Body of pancreas (tissue), 4 donors: ENCODE measurements at regions of chr22 and their contacts with region 1.

Region 1: GRCh38 chr22:31846161-31847115 is 92.6 kb downstream of the DEPDC5 start:
- DNase-seq: no peak
- ATAC-seq: no peak
- H3K4me3 ChIP-seq: no peak overlapping the region
- H3K27ac ChIP-seq: no peak overlapping the region
- H3K4me1 ChIP-seq: no peaks in the 10 kb centered on the region
- H3K27me3 ChIP-seq: no peaks in the 10 kb centered on the region
- CTCF ChIP-seq: peak in 1 of 7 experiments; percentile 11
- POLR2A ChIP-seq: no peak

Region 2: GRCh38 chr22:31901388-31902137 is 55.1 kb after region 1 on chr22:
- intact Hi-C with region 1: loop called (anchors 10 kb)
- DNase-seq: no peak
- ATAC-seq: no peak
- H3K4me3 ChIP-seq: no peak overlapping the region
- H3K27ac ChIP-seq: no peak overlapping the region
- H3K4me1 ChIP-seq: no peaks in the 10 kb centered on the region
- H3K27me3 ChIP-seq: no peaks in the 10 kb centered on the region
- CTCF ChIP-seq: no peak
- POLR2A ChIP-seq: no peak